Pancreas (tissue), 10 donors: ENCODE measurements at regions of chr3 and their contacts with region 1.

Region 1: DNA sequence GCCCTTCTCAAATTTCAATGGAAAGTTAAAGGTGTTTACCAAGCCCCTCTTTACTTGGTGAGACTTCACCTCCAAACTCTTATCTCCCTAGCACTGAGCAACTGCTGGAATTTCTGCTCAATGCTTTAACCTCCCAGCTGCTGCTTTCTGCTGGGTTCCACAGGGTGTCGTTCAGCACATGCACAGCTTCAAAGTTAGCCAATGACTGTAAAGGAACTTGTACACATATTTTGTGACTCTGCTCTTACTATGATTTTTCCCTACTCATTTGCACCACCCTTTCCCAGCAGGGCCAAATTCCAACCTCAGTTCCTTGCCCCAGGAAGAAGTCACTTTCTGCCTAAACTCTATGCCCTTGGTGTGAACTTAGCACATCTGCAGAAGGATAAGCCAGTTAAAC is 89.7 kb downstream of the ULK4 start:
- DNase-seq: no peak
- ATAC-seq: no peak
- H3K4me3 ChIP-seq: no peak overlapping the region
- H3K27ac ChIP-seq: no peak overlapping the region
- H3K4me1 ChIP-seq: no peaks in the 10 kb centered on the region
- H3K27me3 ChIP-seq: no peaks in the 10 kb centered on the region
- CTCF ChIP-seq: no peak

Region 2: DNA sequence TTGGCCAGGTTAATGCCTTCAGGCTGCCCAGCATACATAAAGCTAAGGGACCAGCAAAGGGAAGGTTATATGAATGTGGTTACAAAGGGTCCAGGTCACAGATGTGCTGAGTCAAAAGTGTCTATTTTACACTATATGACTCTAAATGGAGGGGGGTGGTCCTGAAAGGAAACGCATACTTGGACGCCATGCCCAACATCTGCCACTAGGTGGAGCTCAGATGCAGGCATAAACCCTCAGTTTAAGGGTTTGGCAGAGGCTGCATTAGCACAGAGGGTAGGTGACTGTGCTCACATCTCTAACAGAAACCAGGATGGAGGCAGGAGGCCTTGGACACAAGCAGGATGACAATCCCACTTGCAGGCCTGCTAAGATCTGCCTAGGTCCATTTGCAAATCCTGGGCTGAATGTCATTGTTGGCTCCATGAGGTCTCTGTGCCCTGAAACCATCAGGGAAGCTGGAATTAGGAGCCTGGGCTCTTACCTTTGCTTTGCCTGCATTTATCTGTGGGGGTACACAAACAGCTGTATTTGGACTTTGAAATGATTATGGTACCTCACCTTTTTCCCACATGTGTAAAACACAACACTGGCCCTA is 1291.6 kb before region 1 on chr3:
- intact Hi-C with region 1: loop called in 1 of 3 experiments (anchors 5 kb)
- DNase-seq: peak in 5 of 6 donors; percentile 22 to 74 (median 49)
- ATAC-seq: peak; percentile 58 to 79 (median 76)
- H3K4me3 ChIP-seq: no peak overlapping the region
- H3K27ac ChIP-seq: no peak overlapping the region
- H3K4me1 ChIP-seq: no peaks in the 10 kb centered on the region
- H3K27me3 ChIP-seq: no peaks in the 10 kb centered on the region
- CTCF ChIP-seq: peak; percentile 83 to 93 (median 92)

Region 3: GRCh38 chr3:41819226-41819625 is 52.9 kb before region 1 on chr3:
- intact Hi-C with region 1: no loop called
- DNase-seq: no peak
- ATAC-seq: no peak
- H3K4me3 ChIP-seq: no peak overlapping the region
- H3K27ac ChIP-seq: no peak overlapping the region
- H3K4me1 ChIP-seq: no peaks in the 10 kb centered on the region
- H3K27me3 ChIP-seq: no peaks in the 10 kb centered on the region
- CTCF ChIP-seq: no peak